Activated T-helper 1 cell treated with anti-CD3 and anti-CD28 coated beads, Interleukin-12 subunit alpha, Interleukin-12 subunit beta, Interleukin-2, Interleukin-4 antibody, amounts not matched to agents 30 ng/mL and 10 ng/mL and 1 ng/mL, durations not matched to agents 14 hours and 24 hours and 36 hours (primary cell): ENCODE measurements at regions of chr1 and their contacts with region 1.

Region 1: DNA sequence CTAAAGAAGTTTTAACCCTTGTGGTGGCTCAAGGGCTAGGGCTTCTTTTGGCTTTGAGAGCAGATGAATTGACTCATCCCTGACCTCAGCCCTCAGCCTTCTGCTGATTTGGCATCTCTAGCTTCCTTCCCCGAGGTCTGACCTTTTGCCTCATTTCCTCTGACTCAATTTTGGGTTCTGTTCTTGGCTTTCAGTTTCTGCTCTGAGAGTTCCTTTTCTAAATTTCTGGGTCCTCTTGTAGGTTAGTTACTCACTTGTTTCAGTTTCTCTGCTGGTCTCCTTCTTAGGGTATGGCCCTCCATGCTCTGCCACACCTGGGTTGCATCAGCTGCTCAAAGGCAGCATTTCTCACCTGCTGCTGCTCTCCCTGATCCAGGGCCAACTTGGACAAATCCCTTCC is 19.4 kb downstream of the PDE4B start:
- DNase-seq: peak; percentile 77
- H3K4me3 Mint-ChIP-seq: peak overlapping the region; percentile 6
- H3K27ac Mint-ChIP-seq: peak overlapping the region; percentile 68
- H3K4me1 Mint-ChIP-seq: peaks cover 43% of the 10 kb centered on the region
- H3K27me3 Mint-ChIP-seq: peaks cover 13% of the 10 kb centered on the region

Region 2: DNA sequence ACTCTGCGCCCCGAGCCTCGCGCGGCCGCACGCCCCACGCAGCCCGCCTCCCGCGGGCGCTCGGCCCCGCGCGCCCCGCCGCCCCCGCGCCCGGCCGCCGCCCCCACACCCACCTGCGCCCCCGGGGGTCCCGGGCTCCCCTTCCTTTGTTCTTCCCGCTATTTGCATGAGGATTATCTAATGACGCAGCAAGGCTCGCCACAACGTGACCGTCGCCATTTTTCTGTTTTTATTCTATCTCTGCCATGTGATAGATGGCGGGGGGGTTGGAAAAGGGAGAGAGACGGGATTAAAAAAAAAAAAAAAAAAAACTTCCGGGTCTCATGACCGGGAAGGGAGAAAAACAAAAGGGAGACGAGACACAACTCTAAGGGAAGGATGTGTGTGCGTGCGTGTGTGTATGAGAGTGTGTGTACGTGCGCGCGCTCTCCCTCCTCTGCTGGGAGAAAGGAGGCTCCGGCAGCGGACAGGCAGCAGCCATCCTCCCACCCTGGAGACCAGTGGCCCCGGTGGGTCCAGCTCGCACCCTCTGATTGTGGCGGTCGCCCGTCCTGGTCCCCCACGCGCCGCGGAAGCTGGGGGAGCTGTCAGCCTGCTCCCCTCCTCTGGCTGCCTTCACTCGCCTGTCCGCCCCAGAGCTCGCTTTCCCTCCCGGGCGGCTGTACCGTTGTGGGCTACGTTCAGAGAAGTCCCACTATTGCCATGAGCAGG is 744.4 kb before region 1 on chr1:
- intact Hi-C with region 1: loop called (anchors 5 kb)
- DNase-seq: peak; percentile 25
- H3K4me3 Mint-ChIP-seq: peak overlapping the region; percentile 89
- H3K27ac Mint-ChIP-seq: peak overlapping the region; percentile 95
- H3K4me1 Mint-ChIP-seq: peaks cover 41% of the 10 kb centered on the region
- H3K27me3 Mint-ChIP-seq: no peaks in the 10 kb centered on the region

Region 3: GRCh38 chr1:65393347-65393746 is 418.7 kb before region 1 on chr1:
- intact Hi-C with region 1: loop called (anchors 1 kb)
- DNase-seq: peak; percentile 30
- H3K4me3 Mint-ChIP-seq: peak overlapping the region; percentile 35
- H3K27ac Mint-ChIP-seq: peak overlapping the region; percentile 70
- H3K4me1 Mint-ChIP-seq: peaks cover 96% of the 10 kb centered on the region
- H3K27me3 Mint-ChIP-seq: no peaks in the 10 kb centered on the region

Region 4: DNA sequence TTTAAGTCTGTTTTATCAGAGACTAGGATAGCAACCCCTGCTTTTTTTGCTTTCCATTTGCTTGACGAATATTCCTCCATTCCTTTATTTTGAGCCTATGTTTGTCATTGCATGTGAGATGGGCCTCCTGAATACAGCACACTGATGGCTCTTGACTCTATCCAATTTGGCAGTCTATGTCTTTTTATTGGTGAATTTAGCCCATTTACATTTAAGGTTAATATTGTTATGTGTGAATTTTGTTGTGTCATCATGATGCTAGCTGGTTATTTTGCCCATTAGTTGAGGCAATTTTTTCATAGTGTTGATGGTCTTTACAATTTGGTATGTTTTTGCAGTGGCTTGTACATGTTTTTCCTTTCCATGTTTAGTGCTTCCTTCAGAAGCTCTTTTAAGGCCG is 70.1 kb before region 1 on chr1:
- intact Hi-C with region 1: no loop called
- DNase-seq: no peak
- H3K4me3 Mint-ChIP-seq: no peak overlapping the region
- H3K27ac Mint-ChIP-seq: no peak overlapping the region
- H3K4me1 Mint-ChIP-seq: no peaks in the 10 kb centered on the region
- H3K27me3 Mint-ChIP-seq: peaks cover 4% of the 10 kb centered on the region

Region 5: DNA sequence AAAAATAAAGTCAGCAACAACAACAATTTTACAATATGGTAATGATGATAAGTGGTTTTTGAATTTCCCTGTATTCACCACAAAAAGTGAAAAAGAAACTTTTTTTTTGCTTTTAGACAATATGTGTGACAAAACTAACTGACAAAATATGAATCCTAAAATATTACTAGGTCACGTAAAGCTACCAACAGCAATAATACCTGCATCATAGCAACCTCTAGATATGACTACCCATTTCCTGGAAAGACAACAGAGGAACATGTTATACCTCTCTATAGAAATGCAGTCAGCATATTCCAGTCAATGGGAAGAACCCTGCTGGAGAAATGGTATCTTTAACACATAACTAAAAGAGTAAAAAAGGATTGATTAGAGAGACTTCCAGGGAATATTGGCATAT is 54.4 kb after region 1 on chr1:
- intact Hi-C with region 1: loop called (anchors 1 kb)
- DNase-seq: no peak
- H3K4me3 Mint-ChIP-seq: no peak overlapping the region
- H3K27ac Mint-ChIP-seq: peak overlapping the region; percentile 41
- H3K4me1 Mint-ChIP-seq: peaks cover 14% of the 10 kb centered on the region
- H3K27me3 Mint-ChIP-seq: no peaks in the 10 kb centered on the region

Region 6: DNA sequence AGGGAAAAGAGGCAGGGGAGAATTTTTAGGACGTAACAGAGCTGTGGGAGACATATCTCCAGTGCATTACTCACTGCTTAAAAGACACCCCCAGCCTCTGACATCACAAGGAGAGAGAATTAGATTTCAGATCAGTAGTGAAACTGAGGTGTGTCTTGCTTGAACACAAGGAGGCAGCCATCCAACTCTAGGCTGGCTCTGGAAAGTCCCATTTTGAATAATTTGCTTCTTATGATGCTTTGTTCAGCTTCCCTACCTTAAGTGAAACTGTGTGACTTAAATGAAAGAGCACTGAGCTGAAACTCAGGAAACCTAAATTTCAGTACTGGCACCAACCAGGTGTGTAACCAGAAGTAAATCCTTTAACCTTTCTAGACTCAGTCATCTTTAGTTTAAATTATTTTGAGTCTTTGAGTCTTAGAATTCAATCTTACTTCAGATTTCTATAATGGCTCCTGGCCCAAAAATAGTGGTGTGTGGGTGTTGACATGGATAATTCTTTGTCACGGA is 470.3 kb after region 1 on chr1:
- intact Hi-C with region 1: loop called (anchors 2 kb)
- DNase-seq: peak; percentile 73
- H3K4me3 Mint-ChIP-seq: peak overlapping the region; percentile 62
- H3K27ac Mint-ChIP-seq: peak overlapping the region; percentile 88
- H3K4me1 Mint-ChIP-seq: peaks cover 90% of the 10 kb centered on the region
- H3K27me3 Mint-ChIP-seq: no peaks in the 10 kb centered on the region

Region 7: DNA sequence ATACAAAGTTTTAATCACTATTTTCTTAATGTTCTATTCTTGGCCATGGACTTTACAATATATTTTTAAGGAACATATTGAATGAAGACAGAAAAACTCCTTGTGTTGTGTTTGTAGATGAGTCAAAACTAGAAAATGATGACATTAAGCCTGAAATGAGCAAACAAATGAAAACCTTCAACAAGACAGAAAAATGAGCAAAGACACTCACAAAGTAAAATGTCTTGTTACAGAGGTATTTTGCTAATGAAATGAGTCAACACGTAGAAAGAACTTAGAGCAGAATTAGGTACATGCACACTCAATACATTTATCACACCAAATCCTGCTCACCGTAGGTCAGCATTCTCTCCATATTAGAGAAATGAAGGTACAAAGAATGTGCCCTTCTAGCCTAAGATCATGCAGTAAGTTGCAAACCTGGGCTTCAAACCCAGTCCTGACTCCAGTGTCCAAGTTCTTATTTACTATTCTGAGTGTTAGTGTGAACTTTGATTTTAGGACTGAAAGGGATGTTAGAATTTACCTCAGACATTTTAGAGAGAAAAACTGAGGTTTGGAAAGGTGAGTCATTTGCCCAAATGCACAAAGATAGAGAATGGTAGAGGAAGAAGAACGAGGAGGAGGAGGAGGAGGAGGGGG is 587.9 kb after region 1 on chr1:
- intact Hi-C with region 1: loop called (anchors 2 kb)
- DNase-seq: no peak
- H3K4me3 Mint-ChIP-seq: peak overlapping the region; percentile 67
- H3K27ac Mint-ChIP-seq: peak overlapping the region; percentile 88
- H3K4me1 Mint-ChIP-seq: peaks cover 47% of the 10 kb centered on the region
- H3K27me3 Mint-ChIP-seq: no peaks in the 10 kb centered on the region

Region 8: DNA sequence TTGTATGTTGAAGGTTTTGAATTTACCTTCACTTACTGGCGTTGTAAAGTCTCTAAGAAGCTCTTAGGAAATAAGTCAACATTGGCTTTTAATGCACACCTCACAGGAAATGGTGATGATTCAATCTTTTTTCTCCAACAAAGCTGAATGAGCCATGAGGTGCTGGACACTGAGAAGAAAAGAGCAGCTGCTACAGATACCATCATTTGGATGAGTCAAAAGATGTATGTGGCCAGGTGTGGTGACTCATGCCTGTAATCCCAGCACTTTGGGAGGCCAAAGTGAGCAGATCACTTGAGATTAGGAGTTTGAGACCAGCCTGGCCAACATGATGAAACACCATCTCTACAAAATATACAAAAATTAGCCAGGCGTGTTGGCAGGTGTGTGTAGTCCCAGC is 1350.9 kb after region 1 on chr1:
- intact Hi-C with region 1: loop called (anchors 2 kb)
- DNase-seq: peak; percentile 62
- H3K4me3 Mint-ChIP-seq: peak overlapping the region; percentile 55
- H3K27ac Mint-ChIP-seq: peak overlapping the region; percentile 93
- H3K4me1 Mint-ChIP-seq: peaks cover 65% of the 10 kb centered on the region
- H3K27me3 Mint-ChIP-seq: no peaks in the 10 kb centered on the region